ENCODE measurements at regions of chr16 and their contacts with region 1.

Region 1: GRCh38 chr16:14111713-14112540 is 40.8 kb downstream of the MRTFB start:
- DNase-seq: peak; percentile 16
- ATAC-seq: no peak
- H3K4me3 ChIP-seq: no peak overlapping the region
- H3K27ac ChIP-seq: no peak overlapping the region
- H3K4me1 ChIP-seq: peaks cover 34% of the 10 kb centered on the region
- H3K27me3 ChIP-seq: no peaks in the 10 kb centered on the region
- CTCF ChIP-seq: no peak

Region 2: DNA sequence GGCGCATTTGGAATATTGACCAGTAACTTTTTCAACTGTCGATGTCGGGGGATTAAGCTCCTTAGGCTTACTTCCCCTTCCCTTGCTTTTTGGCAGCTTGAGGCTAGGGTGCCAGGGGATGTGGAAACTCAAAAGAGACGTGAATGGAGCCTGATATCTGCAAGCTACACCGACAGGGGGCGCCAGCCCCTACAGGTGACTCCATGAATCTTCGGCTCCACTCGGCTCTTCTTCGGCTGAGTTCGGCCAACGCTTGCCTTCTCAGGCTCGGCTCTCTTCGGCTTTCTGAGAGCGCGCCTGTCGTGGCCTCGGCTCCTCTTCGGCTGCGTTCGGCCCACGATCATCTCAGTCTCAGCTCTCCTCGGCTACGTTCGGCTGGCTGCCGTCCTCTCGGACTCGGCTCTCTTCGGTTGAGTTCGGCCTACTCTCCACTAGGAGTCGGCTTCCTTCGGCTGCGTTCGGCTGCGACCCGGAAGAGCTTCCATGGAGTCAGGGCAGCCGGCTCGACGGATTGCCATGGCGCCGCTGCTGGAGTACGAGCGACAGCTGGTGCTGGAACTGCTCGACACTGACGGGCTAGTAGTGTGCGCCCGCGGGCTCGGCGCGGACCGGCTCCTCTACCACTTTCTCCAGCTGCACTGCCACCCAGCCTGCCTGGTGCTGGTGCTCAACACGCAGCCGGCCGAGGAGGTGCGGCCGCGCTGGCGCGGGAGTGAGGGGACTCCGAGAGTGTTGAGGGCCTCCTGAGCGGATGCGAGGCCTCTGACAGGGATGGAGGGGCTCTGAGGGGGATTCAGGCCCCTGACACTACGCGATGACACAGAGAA is 192.0 kb before region 1 on chr16 and contains the start of gene ERCC4:
- CTCF ChIA-PET with region 1: no interaction called
- POLR2A ChIA-PET with region 1: no interaction called
- intact Hi-C with region 1: no loop called
- DNase-seq: peak; percentile 98
- ATAC-seq: peak; percentile 99
- H3K4me3 ChIP-seq: peak within 1 kb of the TSS; percentile 99
- H3K27ac ChIP-seq: no peak within 1 kb of the TSS
- H3K4me1 ChIP-seq: peaks cover 10% of the 10 kb centered on the region; the same call in 1 of the 2 replicates
- H3K27me3 ChIP-seq: no peaks in the 10 kb centered on the region
- CTCF ChIP-seq: peak; percentile 70
- total RNA-seq, gene ERCC4: 3.2 and 4.9 TPM in 2 replicates

Region 3: GRCh38 chr16:14097182-14097959 is 14.6 kb before region 1 on chr16:
- CTCF ChIA-PET with region 1: interaction called, 13 read pairs
- POLR2A ChIA-PET with region 1: no interaction called
- intact Hi-C with region 1: no loop called
- DNase-seq: peak; percentile 93
- ATAC-seq: peak; percentile 65
- H3K4me3 ChIP-seq: peak overlapping the region; percentile 58
- H3K27ac ChIP-seq: peak overlapping the region; percentile 88
- H3K4me1 ChIP-seq: peaks cover 44% of the 10 kb centered on the region
- H3K27me3 ChIP-seq: no peaks in the 10 kb centered on the region
- CTCF ChIP-seq: no peak

Region 4: GRCh38 chr16:14155572-14156205 is 43.8 kb after region 1 on chr16:
- CTCF ChIA-PET with region 1: no interaction called
- POLR2A ChIA-PET with region 1: no interaction called
- intact Hi-C with region 1: no loop called
- DNase-seq: no peak
- ATAC-seq: no peak
- H3K4me3 ChIP-seq: no peak overlapping the region
- H3K27ac ChIP-seq: no peak overlapping the region
- H3K4me1 ChIP-seq: no peaks in the 10 kb centered on the region
- H3K27me3 ChIP-seq: no peaks in the 10 kb centered on the region
- CTCF ChIP-seq: no peak

Region 5: GRCh38 chr16:14202697-14203096 is 90.8 kb after region 1 on chr16:
- CTCF ChIA-PET with region 1: no interaction called
- POLR2A ChIA-PET with region 1: no interaction called
- intact Hi-C with region 1: no loop called
- DNase-seq: peak; percentile 19
- ATAC-seq: peak; percentile 27; the same call in 1 of the 2 replicates
- H3K4me3 ChIP-seq: no peak overlapping the region
- H3K27ac ChIP-seq: no peak overlapping the region
- H3K4me1 ChIP-seq: peaks cover 11% of the 10 kb centered on the region
- H3K27me3 ChIP-seq: no peaks in the 10 kb centered on the region
- CTCF ChIP-seq: peak; percentile 48; the same call in 1 of the 2 replicates

Measured in PC-3 (cell line).